PC-9 (cell line): ENCODE measurements at regions of chr11 and their contacts with region 1.

Region 1: GRCh38 chr11:45930031-45930794 is 7.8 kb downstream of the LARGE2 start:
- DNase-seq: peak in 1 of 2 experiments; percentile 40
- H3K4me3 ChIP-seq: no peak overlapping the region
- H3K27ac ChIP-seq: no peak overlapping the region
- H3K4me1 ChIP-seq: 0 out of 2 replicates have a peak, but pooled peaks cover 4% of the 10 kb centered on the region
- H3K27me3 ChIP-seq: no peaks in the 10 kb centered on the region
- CTCF ChIP-seq: no peak

Region 2: DNA sequence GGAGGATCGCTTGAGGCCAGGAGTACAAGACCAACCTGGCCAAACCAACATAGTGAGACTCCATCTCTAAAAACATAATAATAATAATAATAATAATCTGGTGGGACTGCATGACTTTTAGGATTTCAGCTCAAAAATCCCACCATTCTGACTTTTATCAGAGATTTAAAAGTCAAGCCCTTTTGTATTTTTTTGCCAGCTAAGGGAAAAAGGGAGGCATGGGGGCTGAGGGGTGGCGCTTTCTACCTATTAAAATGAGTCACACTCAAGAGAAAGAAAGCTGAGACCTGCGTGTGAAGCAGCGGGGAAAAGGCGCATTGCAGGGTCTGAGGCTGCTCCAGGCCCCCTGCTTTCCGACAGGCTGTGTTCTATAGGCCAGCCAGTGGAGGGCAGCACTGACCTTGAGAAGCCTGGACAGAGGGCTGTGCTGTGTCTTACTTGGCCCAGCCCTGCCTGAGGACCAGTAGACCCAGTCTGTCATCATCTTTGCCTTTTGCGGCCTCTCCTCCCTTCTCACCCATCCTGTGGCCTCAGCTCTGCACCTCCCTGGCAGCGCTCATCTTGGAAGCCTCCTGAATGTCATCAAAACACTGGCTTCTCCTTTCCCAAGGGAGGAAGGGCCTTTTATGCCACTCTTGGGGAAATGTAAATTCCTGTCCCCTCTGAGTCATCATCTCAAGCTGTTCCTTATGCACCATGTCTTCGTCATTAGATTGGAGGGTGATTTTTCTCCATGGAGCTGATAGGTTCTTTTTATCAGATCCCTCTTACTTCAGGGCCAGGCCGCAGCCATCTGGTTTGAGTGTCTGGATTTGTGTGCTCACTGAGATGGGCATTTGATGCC is 57.5 kb before region 1 on chr11:
- CTCF ChIA-PET with region 1: no interaction called
- POLR2A ChIA-PET with region 1: no interaction called
- intact Hi-C with region 1: no loop called
- DNase-seq: peak; percentile 56 to 69
- H3K4me3 ChIP-seq: no peak overlapping the region
- H3K27ac ChIP-seq: no peak overlapping the region
- H3K4me1 ChIP-seq: no peaks in the 10 kb centered on the region
- H3K27me3 ChIP-seq: no peaks in the 10 kb centered on the region
- CTCF ChIP-seq: peak; percentile 88

Region 3: GRCh38 chr11:45945397-45945999 is 15.3 kb after region 1 on chr11:
- CTCF ChIA-PET with region 1: no interaction called
- POLR2A ChIA-PET with region 1: no interaction called
- intact Hi-C with region 1: no loop called
- DNase-seq: no peak
- H3K4me3 ChIP-seq: no peak overlapping the region
- H3K27ac ChIP-seq: no peak overlapping the region
- H3K4me1 ChIP-seq: no peaks in the 10 kb centered on the region
- H3K27me3 ChIP-seq: no peaks in the 10 kb centered on the region
- CTCF ChIP-seq: no peak

Region 4: DNA sequence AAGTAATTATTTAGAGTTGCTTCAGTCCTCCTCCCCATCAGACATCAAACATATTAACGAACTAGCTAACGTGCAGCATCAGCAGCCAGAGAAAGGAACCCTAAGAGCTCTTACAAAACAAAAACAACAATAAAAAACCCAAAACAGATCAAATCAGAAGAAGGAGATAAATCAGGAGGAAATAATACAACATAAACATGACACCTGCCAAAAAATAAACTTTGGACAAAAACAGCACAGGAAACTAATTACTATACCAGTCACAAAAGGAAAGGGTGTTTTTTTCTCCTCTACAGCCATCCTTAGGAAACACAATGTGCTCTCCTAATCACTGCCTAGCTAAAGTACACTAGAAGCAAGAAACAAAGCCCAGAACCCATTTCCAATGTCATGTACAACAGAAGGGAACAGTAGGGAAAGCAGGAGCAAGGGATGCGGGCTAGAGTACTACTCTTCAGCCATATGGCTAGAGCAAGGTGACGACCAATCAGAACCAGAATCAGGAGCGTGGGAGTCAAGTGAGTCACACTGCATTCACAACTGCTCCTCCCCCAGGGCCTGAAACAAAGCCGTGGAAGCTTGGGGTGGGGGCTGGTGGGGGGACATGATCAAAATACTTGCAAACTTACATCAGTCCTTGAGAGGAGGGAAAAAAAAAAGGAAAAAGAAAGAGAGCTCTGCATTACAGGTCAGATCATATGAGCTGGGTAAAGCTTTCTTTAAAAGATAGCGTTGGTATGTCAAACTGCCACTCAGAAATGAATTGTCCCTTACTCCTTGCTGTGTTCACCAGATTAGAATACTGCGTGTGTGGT is 52.6 kb after region 1 on chr11:
- CTCF ChIA-PET with region 1: no interaction called
- POLR2A ChIA-PET with region 1: interaction called, 29 read pairs
- intact Hi-C with region 1: no loop called
- DNase-seq: no peak
- H3K4me3 ChIP-seq: no peak overlapping the region
- H3K27ac ChIP-seq: no peak overlapping the region
- H3K4me1 ChIP-seq: no peaks in the 10 kb centered on the region
- H3K27me3 ChIP-seq: no peaks in the 10 kb centered on the region
- CTCF ChIP-seq: no peak